ENCODE measurements at regions of chr6 and their contacts with region 1.

Region 1: DNA sequence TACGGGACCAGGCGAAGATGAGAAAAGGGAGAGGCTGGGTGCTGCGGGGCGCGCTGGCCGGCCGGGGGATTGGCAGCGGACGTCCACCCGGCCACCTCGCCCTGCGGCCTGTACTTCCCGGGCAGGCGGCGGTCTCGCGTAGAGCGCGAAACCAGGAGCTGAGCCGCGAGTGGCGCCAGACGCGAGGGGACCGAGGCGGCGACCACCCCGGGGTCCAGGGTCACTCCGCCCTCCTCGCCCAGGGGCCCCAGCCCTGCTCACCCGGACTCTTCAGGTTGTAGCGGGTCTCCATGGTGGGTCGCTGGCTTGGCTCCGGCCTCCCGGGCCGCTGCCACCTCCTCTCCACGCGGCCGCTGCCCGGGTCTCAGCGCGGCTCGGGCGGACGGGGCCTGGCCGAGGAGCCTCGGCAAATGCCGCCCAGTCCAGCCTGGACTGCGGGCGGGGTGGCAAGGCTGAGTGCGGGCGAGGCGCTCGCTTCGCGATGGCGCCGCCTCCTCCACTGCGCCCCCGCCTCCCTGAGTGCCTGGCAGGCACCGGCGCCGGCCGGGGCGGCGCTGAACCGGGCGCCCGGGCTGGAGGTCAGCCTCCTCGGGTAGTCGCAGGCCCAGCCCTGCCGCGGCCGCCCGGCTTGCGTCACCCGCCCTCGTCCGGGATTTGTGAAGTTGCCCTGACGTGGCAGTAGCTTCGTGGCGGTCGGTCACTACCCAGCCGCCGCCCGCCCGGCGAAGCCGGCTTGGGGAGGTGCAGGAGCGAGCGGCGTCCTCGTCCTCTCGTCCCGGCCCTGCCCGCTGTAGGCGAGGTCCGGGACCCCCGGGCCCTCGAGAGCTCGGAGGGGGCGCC is at the start of gene UBE2J1:
- DNase-seq: peak; percentile 74
- H3K4me3 Mint-ChIP-seq: peak within 1 kb of the TSS; percentile 96
- H3K27ac Mint-ChIP-seq: peak within 1 kb of the TSS; percentile 92
- H3K4me1 Mint-ChIP-seq: peaks cover 66% of the 10 kb centered on the region
- H3K27me3 Mint-ChIP-seq: no peaks in the 10 kb centered on the region
- total RNA-seq, gene UBE2J1: 34.4 and 34.8 TPM in 2 replicates

Region 2: DNA sequence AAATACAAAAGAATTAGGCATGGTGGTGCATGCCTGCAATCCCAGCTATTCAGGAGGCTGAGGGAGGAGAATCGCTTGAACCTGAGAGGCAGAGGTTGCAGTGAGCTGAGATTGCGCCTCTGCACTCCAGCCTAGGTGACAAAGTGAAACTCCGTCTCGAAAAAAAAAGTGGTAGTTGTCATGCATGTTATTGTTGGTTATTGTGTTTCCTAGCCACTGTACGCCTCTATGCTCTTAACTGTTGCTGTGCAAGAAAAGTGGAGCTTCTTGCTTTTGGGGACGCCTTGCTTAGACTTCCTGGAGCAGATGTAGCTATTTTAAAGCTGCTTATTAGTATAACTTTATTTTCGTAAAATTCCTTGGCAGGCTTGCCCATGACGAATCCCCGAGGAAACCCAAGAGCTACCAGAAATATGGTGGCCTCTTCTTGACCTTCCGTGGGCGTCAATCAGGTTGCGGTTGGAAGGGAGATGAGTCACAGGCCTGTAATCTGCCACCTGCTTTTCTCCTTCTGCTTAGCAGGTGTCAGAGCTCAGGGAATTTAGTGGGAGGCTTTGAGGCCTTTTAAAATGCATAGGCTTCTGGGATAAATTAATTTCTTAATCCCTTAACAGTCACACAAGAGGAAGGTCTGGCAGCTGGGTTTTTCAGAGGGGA is 54.7 kb before region 1 on chr6:
- intact Hi-C with region 1: loop called (anchors 1 kb)
- DNase-seq: peak; percentile 60
- H3K4me3 Mint-ChIP-seq: peak overlapping the region; percentile 37
- H3K27ac Mint-ChIP-seq: peak overlapping the region; percentile 83
- H3K4me1 Mint-ChIP-seq: peaks cover 25% of the 10 kb centered on the region
- H3K27me3 Mint-ChIP-seq: no peaks in the 10 kb centered on the region

Region 3: GRCh38 chr6:89339565-89339964 is 12.9 kb before region 1 on chr6:
- intact Hi-C with region 1: no loop called
- DNase-seq: no peak
- H3K4me3 Mint-ChIP-seq: no peak overlapping the region
- H3K27ac Mint-ChIP-seq: no peak overlapping the region
- H3K4me1 Mint-ChIP-seq: peaks cover 8% of the 10 kb centered on the region
- H3K27me3 Mint-ChIP-seq: no peaks in the 10 kb centered on the region

Measured in activated T-helper 2 cell treated with anti-CD3 and anti-CD28 coated beads, Interferon-gamma antibody, Interleukin-2, Interleukin-4, amounts not matched to agents 10 μg/mL and 5 μg/mL and 100 μg/mL, durations not matched to agents 14 hours and 24 hours and 36 hours (primary cell).